ENCODE measurements at regions of chr17 and their contacts with region 1.

Region 1: GRCh38 chr17:81558941-81559806 is 7.0 kb upstream of the FAAP100 start:
- DNase-seq: peak in 1 of 2 donors; percentile 27
- ATAC-seq: no peak
- H3K4me3 ChIP-seq: no peak overlapping the region
- H3K27ac ChIP-seq: no peak overlapping the region
- H3K4me1 ChIP-seq: peaks cover 23% of the 10 kb centered on the region
- H3K27me3 ChIP-seq: no peaks in the 10 kb centered on the region
- CTCF ChIP-seq: no peak

Region 2: GRCh38 chr17:81601525-81602120 is 42.4 kb after region 1 on chr17:
- intact Hi-C with region 1: loop called in 1 of 2 experiments (anchors 5 kb)
- DNase-seq: no peak
- ATAC-seq: peak; percentile 57 to 78 (median 70)
- H3K4me3 ChIP-seq: no peak overlapping the region
- H3K27ac ChIP-seq: no peak overlapping the region
- H3K4me1 ChIP-seq: peaks cover 3% of the 10 kb centered on the region
- H3K27me3 ChIP-seq: no peaks in the 10 kb centered on the region
- CTCF ChIP-seq: peak; percentile 62

Measured in psoas muscle (tissue), 8 donors.